ENCODE measurements at regions of chr14 and their contacts with region 1.

Region 1: GRCh38 chr14:99793213-99794150 is at the start of gene EML1:
- DNase-seq: peak; percentile 63
- H3K4me3 Mint-ChIP-seq: peak within 1 kb of the TSS; percentile 66
- H3K27ac Mint-ChIP-seq: no peak within 1 kb of the TSS
- H3K4me1 Mint-ChIP-seq: peaks cover 24% of the 10 kb centered on the region
- H3K27me3 Mint-ChIP-seq: no peaks in the 10 kb centered on the region
- CTCF ChIP-seq: no peak
- total RNA-seq, gene EML1: 9.5 and 11.6 TPM in 2 replicates

Region 2: GRCh38 chr14:99683619-99684355 is 109.7 kb before region 1 on chr14 and contains the start of gene CYP46A1:
- CTCF ChIA-PET with region 1: interaction called, 3 read pairs
- POLR2A ChIA-PET with region 1: no interaction called
- intact Hi-C with region 1: loop called (anchors 5 kb)
- DNase-seq: peak; percentile 98
- H3K4me3 Mint-ChIP-seq: peak within 1 kb of the TSS; percentile 78
- H3K27ac Mint-ChIP-seq: no peak within 1 kb of the TSS
- H3K4me1 Mint-ChIP-seq: peaks cover 6% of the 10 kb centered on the region
- H3K27me3 Mint-ChIP-seq: peaks cover 28% of the 10 kb centered on the region
- CTCF ChIP-seq: no peak
- total RNA-seq, gene CYP46A1: 0.20 and 0.30 TPM in 2 replicates

Region 3: DNA sequence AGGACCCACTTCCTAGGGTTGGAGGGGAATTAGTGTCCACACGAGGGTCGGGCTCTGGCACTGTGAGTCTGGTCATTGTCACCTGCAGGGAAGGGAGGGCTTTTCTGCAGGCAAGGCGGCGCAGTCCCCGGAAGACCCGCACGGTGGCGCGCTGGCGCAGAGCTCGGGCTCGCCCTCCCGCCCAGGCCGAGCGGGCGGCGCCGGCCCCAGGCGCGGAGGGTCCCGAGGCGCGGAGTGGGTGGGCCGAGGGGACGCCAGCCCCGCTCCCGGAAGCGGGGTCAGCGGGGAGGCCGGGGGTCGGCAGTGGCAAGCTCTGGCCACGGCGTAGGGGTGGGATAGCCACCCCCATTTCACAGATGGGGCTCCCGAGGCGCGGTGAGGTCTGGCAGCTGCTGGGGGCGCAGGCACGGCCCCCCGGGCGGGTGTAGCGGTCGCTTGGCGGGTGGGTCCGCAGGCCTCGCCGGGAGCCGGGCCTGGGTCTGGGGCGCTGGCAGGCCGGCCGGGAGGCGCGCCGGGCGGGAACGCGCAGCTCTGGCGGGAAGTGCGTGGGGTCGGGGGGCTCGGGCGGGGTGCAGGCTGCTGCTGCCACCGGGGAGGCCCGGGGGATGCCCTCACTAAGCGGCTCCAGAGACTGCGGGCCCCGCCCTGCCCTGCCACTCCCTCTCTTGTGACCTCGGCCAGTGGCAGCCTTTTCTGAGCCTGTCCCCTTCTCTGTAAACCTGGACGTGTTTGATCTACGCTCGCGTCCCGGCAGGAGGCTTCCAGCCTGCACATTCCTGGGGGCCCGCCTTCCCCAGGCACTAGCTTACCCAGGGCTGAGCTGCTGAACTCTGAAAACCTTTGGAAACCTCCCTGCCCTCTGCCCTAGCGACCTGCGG is 63.3 kb before region 1 on chr14:
- CTCF ChIA-PET with region 1: interaction called, 13 read pairs
- POLR2A ChIA-PET with region 1: interaction called, 8 read pairs
- intact Hi-C with region 1: loop called (anchors 2 kb)
- DNase-seq: peak; percentile 34
- H3K4me3 Mint-ChIP-seq: no peak overlapping the region
- H3K27ac Mint-ChIP-seq: no peak overlapping the region
- H3K4me1 Mint-ChIP-seq: no peaks in the 10 kb centered on the region
- H3K27me3 Mint-ChIP-seq: no peaks in the 10 kb centered on the region
- CTCF ChIP-seq: peak; percentile 90

Region 4: DNA sequence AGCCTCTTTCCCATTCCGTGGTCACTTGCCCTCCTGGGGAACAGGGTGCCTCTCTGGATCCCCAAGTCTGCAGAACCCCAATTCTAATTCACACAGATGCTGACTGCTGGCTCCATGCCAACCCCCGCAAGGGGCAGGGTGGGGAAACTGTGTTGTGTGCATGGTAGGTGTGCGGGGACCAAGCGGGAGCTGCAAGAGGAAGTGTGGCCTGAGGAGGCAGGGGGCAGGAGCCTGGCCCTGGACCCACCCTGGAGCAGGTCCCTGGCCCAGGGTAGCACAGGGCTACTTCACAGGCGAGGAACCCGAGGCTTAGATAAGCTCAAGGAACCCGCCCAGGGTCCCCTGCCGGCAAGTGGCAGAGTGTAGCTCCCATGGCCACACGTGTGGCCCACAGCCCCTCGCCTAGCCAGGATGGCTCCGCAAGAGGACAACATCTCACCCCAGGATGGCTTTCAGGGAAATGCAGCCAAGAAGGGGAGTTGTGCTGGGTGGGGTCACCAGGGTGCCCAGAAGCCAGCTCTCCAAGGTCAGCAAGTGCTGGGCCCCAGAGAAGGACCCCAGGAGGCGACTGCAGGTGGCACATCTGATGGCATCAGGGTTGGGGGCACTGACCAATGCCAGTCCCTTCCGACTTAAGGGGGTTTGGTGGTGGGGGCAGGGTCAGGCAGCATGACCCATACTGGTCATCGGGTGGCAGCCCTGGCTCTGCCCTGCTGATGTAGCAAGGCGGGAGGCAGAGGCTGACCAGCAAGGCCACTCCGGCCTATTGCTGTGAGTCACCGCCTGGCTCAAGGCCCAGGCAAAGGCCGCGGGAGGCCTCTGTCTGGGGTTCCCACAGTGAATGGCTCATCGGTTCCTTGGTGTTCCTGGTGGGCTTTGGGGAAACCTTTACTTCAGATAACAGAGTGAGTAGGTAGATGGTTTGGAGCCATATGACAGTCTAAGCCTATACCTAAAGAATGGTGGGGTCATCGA is 37.6 kb before region 1 on chr14:
- CTCF ChIA-PET with region 1: interaction called, 3 read pairs
- POLR2A ChIA-PET with region 1: interaction called, 19 read pairs
- intact Hi-C with region 1: loop called (anchors 2 kb)
- DNase-seq: peak; percentile 86
- H3K4me3 Mint-ChIP-seq: no peak overlapping the region
- H3K27ac Mint-ChIP-seq: peak overlapping the region; percentile 57
- H3K4me1 Mint-ChIP-seq: peaks cover 28% of the 10 kb centered on the region
- H3K27me3 Mint-ChIP-seq: no peaks in the 10 kb centered on the region
- CTCF ChIP-seq: no peak

Measured in MCF 10A (cell line).